ENCODE measurements at regions of chr12 and their contacts with region 1.

Region 1: DNA sequence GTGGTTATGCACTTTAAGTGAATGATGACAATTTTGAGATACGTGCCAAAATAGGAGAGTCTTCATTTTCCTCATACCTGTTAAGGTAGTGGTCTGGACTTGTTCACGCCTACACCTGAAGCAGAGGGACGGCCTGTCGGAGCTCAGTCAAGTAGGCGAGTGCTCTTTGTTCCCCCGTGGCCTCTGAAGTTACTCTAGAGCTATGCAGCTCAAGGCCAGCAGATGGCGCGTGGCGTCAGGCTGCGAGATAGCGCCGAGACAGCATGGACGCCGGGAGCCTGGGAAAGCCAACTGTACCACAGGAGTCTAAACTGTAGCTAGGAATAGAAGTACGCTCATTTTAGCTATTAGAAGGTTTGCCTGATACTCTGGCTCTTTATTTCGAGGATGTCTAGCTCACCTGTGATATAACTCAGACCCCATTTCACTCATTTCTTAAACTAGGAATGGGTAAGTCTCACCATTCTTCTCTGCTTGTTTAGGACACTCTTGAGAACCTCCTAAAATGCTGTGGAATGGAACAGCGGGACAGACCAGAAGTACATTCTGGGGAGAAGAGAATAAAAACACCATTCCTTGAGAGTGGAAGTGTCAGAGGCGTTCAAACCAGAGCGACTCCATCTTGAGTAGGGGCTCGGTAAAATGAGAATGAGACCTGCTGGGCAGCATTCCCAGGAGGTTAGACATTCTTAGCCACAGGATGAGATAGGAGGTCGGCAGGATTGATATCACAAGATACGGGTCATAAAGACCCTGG is 267.4 kb upstream of the HMGA2 start:
- DNase-seq: peak; percentile 79
- H3K4me3 ChIP-seq: no peak overlapping the region
- H3K27ac ChIP-seq: no peak overlapping the region
- H3K4me1 ChIP-seq: peaks cover 0 to 3% (median 0%) of the 10 kb centered on the region in 4 donors
- H3K27me3 ChIP-seq: peaks cover 15% of the 10 kb centered on the region
- CTCF ChIP-seq: peak; percentile 81 to 89 (median 84)
- EP300 ChIP-seq: no peak
- POLR2A ChIP-seq: no peak

Region 2: DNA sequence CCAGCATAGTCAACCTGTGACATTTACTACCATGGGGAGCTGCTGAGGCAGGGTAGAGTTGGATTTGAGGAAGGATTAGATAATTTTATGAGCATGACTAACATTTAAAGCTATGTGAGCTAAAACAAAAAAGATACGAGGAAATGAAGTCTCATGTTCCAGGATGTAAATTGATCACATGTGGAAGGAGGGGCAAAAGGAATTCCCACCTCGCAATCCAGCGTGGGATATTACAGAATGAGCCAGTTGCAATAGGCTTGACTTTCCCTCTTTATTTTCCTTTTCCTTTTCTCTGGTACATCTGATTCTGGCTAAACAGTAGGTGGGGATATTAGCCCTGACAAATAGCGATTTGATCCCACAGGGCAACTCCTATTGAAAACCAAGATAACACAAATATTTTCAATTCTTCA is 52.5 kb after region 1 on chr12:
- in situ Hi-C with region 1: no loop called
- intact Hi-C with region 1: no loop called
- DNase-seq: no peak
- H3K4me3 ChIP-seq: no peak overlapping the region
- H3K27ac ChIP-seq: no peak overlapping the region
- H3K4me1 ChIP-seq: peaks cover 0 to 17% (median 0%) of the 10 kb centered on the region in 4 donors
- H3K27me3 ChIP-seq: peaks cover 14% of the 10 kb centered on the region
- CTCF ChIP-seq: no peak
- EP300 ChIP-seq: no peak
- POLR2A ChIP-seq: no peak

Region 3: DNA sequence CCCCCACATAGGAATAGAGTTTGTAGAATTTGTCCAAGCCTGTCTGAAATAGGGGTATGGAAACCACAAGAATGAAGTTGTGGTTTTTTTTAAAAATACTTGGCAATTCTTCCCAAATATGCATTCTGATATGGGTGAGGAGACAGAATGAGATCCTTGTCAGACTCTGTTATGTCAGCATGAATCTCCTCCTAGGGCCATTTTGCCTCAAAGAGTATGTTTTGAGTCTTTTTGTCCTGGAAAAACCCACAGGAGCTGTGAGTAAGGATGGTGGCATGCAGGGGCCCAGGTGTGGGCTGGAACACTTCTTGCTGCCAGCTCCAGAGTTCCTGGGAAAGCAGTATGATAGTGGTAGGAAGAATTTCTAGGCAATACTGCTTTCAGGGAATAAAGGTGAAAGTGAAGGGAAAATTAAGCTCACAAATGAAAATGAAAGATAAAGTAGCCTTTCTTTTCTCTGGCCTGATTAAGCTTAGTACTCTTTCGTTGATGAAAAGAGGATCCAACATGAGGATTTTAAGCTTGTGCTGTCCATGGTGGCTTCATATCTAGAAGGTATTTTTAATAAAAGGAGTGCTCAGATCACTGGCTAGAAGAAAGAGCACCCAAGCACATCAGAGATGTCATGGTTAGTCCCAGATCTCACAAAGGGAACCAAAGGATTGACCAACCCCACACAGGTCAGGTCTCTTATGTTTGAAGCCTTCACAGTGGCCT is 442.9 kb after region 1 on chr12:
- in situ Hi-C with region 1: loop called in 1 of 4 experiments (anchors 25 kb)
- intact Hi-C with region 1: no loop called
- DNase-seq: no peak
- H3K4me3 ChIP-seq: no peak overlapping the region
- H3K27ac ChIP-seq: no peak overlapping the region
- H3K4me1 ChIP-seq: no peaks in the 10 kb centered on the region
- H3K27me3 ChIP-seq: no peaks in the 10 kb centered on the region
- CTCF ChIP-seq: no peak
- EP300 ChIP-seq: no peak
- POLR2A ChIP-seq: no peak

Region 4: DNA sequence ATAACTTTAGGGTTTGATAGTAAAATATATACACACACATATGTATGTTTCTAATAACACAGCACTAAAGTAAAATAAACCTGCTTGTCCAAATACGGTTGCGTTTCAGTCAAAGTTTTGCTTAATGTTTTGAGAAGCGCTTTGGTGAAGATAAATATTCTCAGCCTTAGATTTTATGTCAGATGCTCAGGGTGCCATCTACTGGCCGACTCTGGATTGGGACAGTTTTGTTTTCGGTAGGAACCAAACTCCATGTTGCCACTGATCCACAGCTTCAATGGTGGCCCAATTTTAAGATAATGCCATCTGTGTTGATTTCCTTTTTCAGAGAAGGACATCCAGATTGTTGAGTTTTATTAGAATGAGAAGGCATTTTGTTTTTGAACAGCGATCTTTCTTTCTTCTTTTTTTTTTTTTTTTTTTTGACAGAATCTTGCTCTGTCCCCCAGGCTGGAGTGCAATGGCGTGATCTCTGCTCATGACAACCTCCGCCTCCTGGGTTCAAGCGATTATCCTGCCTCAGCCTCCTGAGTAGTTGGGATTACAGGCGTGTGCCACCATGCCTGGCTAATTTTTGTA is 530.6 kb after region 1 on chr12:
- in situ Hi-C with region 1: loop called in 3 of 4 experiments (anchors 25 kb)
- intact Hi-C with region 1: loop called (anchors 5 kb)
- DNase-seq: peak; percentile 62
- H3K4me3 ChIP-seq: no peak overlapping the region
- H3K27ac ChIP-seq: no peak overlapping the region
- H3K4me1 ChIP-seq: no peaks in the 10 kb centered on the region
- H3K27me3 ChIP-seq: no peaks in the 10 kb centered on the region
- CTCF ChIP-seq: peak; percentile 59 to 69 (median 61)
- EP300 ChIP-seq: no peak
- POLR2A ChIP-seq: no peak

Measured in transverse colon (tissue), 4 donors.